HepG2 (cell line): ENCODE measurements at regions of chr12 and their contacts with region 1.

Region 1: GRCh38 chr12:92928962-92929915 is at the start of gene EEA1:
- DNase-seq: peak; percentile 91
- ATAC-seq: peak; percentile 95
- H3K4me3 ChIP-seq: peak within 1 kb of the TSS; percentile 72 to 89 (median 89)
- H3K27ac ChIP-seq: peak within 1 kb of the TSS; percentile 93
- H3K4me1 ChIP-seq: peaks cover 59% of the 10 kb centered on the region
- H3K27me3 ChIP-seq: no peaks in the 10 kb centered on the region
- CTCF ChIP-seq: peak; percentile 42; the same call in 1 of the 2 replicates
- EP300 ChIP-seq: peak in 1 of 2 experiments; percentile 34; a peak in 1 of 4 replicates
- POLR2A ChIP-seq: peak; percentile 88 to 90
- RAD21 ChIP-seq: peak; percentile 60; the same call in 1 of the 2 replicates
- total RNA-seq, gene EEA1: 19.3 and 42.7 TPM in 2 replicates

Region 2: GRCh38 chr12:92539113-92539749 is 390.0 kb before region 1 on chr12:
- CTCF ChIA-PET with region 1: no interaction called
- POLR2A ChIA-PET with region 1: no interaction called
- in situ Hi-C with region 1: no loop called
- intact Hi-C with region 1: no loop called
- DNase-seq: no peak
- ATAC-seq: no peak
- H3K4me3 ChIP-seq: no peak overlapping the region
- H3K27ac ChIP-seq: no peak overlapping the region
- H3K4me1 ChIP-seq: peaks cover 15% of the 10 kb centered on the region
- H3K27me3 ChIP-seq: no peaks in the 10 kb centered on the region
- CTCF ChIP-seq: no peak
- EP300 ChIP-seq: no peak
- POLR2A ChIP-seq: no peak
- RAD21 ChIP-seq: no peak

Region 3: GRCh38 chr12:92827836-92828431 is 101.3 kb before region 1 on chr12:
- CTCF ChIA-PET with region 1: interaction called, 3 read pairs
- POLR2A ChIA-PET with region 1: interaction called, 9 read pairs
- in situ Hi-C with region 1: no loop called
- intact Hi-C with region 1: loop called (anchors 5 kb)
- DNase-seq: peak; percentile 46
- ATAC-seq: peak; percentile 66
- H3K4me3 ChIP-seq: no peak overlapping the region
- H3K27ac ChIP-seq: no peak overlapping the region
- H3K4me1 ChIP-seq: no peaks in the 10 kb centered on the region
- H3K27me3 ChIP-seq: no peaks in the 10 kb centered on the region
- CTCF ChIP-seq: peak; percentile 60
- EP300 ChIP-seq: no peak
- POLR2A ChIP-seq: no peak
- RAD21 ChIP-seq: 0 out of 2 replicates have a peak, but pooled peaks have one; percentile 35

Region 4: GRCh38 chr12:92859650-92860386 is 69.4 kb before region 1 on chr12:
- CTCF ChIA-PET with region 1: no interaction called
- POLR2A ChIA-PET with region 1: interaction called, 3 read pairs
- in situ Hi-C with region 1: no loop called
- intact Hi-C with region 1: loop called (anchors 10 kb)
- DNase-seq: no peak
- ATAC-seq: peak; percentile 53
- H3K4me3 ChIP-seq: no peak overlapping the region
- H3K27ac ChIP-seq: no peak overlapping the region
- H3K4me1 ChIP-seq: peaks cover 26% of the 10 kb centered on the region
- H3K27me3 ChIP-seq: no peaks in the 10 kb centered on the region
- CTCF ChIP-seq: no peak
- EP300 ChIP-seq: no peak
- POLR2A ChIP-seq: no peak
- RAD21 ChIP-seq: no peak

Region 5: GRCh38 chr12:92899388-92900001 is 29.7 kb before region 1 on chr12:
- CTCF ChIA-PET with region 1: no interaction called
- POLR2A ChIA-PET with region 1: interaction called, 20 read pairs
- in situ Hi-C with region 1: no loop called
- intact Hi-C with region 1: no loop called
- DNase-seq: peak; percentile 85
- ATAC-seq: peak; percentile 97
- H3K4me3 ChIP-seq: peak overlapping the region in 1 of 3 experiments; percentile 11; a peak in 1 of 6 replicates
- H3K27ac ChIP-seq: peak overlapping the region; percentile 48
- H3K4me1 ChIP-seq: peaks cover 25% of the 10 kb centered on the region
- H3K27me3 ChIP-seq: no peaks in the 10 kb centered on the region; a peak in 1 of 5 replicates
- CTCF ChIP-seq: no peak
- EP300 ChIP-seq: no peak
- POLR2A ChIP-seq: no peak
- RAD21 ChIP-seq: no peak

Region 6: GRCh38 chr12:92943482-92944250 is 14.4 kb after region 1 on chr12:
- CTCF ChIA-PET with region 1: no interaction called
- POLR2A ChIA-PET with region 1: interaction called, 27 read pairs
- in situ Hi-C with region 1: no loop called
- intact Hi-C with region 1: no loop called
- DNase-seq: peak; percentile 66
- ATAC-seq: peak; percentile 60
- H3K4me3 ChIP-seq: no peak overlapping the region
- H3K27ac ChIP-seq: peak overlapping the region; percentile 86
- H3K4me1 ChIP-seq: peaks cover 66% of the 10 kb centered on the region
- H3K27me3 ChIP-seq: no peaks in the 10 kb centered on the region
- CTCF ChIP-seq: peak; percentile 46
- EP300 ChIP-seq: 0 out of 4 replicates have a peak, but pooled peaks of 1 of the 2 experiments have one; percentile 7
- POLR2A ChIP-seq: no peak
- RAD21 ChIP-seq: no peak

Region 7: DNA sequence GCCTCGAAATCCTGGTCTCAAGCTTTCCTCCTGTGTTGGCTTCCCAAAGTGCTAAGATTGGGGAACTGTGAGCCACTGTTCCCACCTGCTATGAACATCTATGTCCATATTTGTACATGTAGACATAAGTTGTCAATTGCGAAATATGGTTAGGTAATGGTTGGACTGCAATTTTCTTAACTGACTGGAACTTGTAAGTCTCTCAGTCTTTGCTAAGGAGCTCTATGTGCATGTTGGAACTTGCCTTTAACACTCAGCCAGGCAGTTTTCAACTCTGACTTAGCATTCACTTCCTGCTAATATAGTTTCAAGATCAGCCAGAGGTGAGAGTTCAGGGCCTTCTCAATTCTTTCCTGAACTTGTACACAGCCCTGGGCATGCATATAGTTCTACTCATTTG is 44.4 kb after region 1 on chr12:
- CTCF ChIA-PET with region 1: no interaction called
- POLR2A ChIA-PET with region 1: interaction called, 9 read pairs
- in situ Hi-C with region 1: no loop called
- intact Hi-C with region 1: loop called (anchors 5 kb)
- DNase-seq: peak; percentile 63
- ATAC-seq: peak; percentile 35; the same call in 2 of the 3 replicates
- H3K4me3 ChIP-seq: no peak overlapping the region
- H3K27ac ChIP-seq: peak overlapping the region; percentile 42
- H3K4me1 ChIP-seq: peaks cover 38% of the 10 kb centered on the region
- H3K27me3 ChIP-seq: no peaks in the 10 kb centered on the region
- CTCF ChIP-seq: no peak
- EP300 ChIP-seq: no peak; a peak in 1 of 4 replicates
- POLR2A ChIP-seq: no peak
- RAD21 ChIP-seq: no peak

Region 8: GRCh38 chr12:93365616-93366405 is 436.6 kb after region 1 on chr12:
- CTCF ChIA-PET with region 1: no interaction called
- POLR2A ChIA-PET with region 1: no interaction called
- in situ Hi-C with region 1: no loop called
- intact Hi-C with region 1: no loop called
- DNase-seq: no peak
- ATAC-seq: no peak
- H3K4me3 ChIP-seq: no peak overlapping the region
- H3K27ac ChIP-seq: no peak overlapping the region
- H3K4me1 ChIP-seq: peaks cover 3% of the 10 kb centered on the region
- H3K27me3 ChIP-seq: no peaks in the 10 kb centered on the region
- CTCF ChIP-seq: no peak
- EP300 ChIP-seq: no peak
- POLR2A ChIP-seq: no peak
- RAD21 ChIP-seq: no peak